Transverse colon (tissue), 4 donors: ENCODE measurements at regions of chr4 and their contacts with region 1.

Region 1: DNA sequence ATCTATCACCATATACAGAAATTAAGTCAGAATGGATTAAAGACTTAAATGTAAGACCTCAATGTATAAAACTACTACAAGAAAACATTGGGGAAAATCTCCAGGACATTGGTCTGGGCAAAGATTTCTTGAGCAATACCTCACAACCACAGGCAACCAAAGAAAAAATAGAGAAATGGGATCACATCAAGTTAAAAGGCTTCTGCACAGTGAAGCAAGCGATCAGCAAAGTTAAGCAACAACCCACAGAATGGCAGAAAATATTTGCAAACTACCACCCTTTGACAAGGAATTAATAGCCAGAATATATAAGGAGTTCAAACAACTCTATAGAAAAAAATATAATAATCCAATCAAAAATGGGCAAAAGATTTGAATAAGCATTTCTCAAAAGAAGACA is 236.9 kb upstream of the EMCN start:
- DNase-seq: no peak
- H3K4me3 ChIP-seq: no peak overlapping the region
- H3K27ac ChIP-seq: no peak overlapping the region
- H3K4me1 ChIP-seq: no peaks in the 10 kb centered on the region
- H3K27me3 ChIP-seq: no peaks in the 10 kb centered on the region
- CTCF ChIP-seq: no peak
- EP300 ChIP-seq: no peak
- POLR2A ChIP-seq: no peak

Region 2: GRCh38 chr4:100679926-100680325 is 74.8 kb before region 1 on chr4:
- in situ Hi-C with region 1: no loop called
- intact Hi-C with region 1: no loop called
- DNase-seq: no peak
- H3K4me3 ChIP-seq: no peak overlapping the region
- H3K27ac ChIP-seq: no peak overlapping the region
- H3K4me1 ChIP-seq: no peaks in the 10 kb centered on the region
- H3K27me3 ChIP-seq: no peaks in the 10 kb centered on the region
- CTCF ChIP-seq: no peak
- EP300 ChIP-seq: no peak
- POLR2A ChIP-seq: no peak

Region 3: DNA sequence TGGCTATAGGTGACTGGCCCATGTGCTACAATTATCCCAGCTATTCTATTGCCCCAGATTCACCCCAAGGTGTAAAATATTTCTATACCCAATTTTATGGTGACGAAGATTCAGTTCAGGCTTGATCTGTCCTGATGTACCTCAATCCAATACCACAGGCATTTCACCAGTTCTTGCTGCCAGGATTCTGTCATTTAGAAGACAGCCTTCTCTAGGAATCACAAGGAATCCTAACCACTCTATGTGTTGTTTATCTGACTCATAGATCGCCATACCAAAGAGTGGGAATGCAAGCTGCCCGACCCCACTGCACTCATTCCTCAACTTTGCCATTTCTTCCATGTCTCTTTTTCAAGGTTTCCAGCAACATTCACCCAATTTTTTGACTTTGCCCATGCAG is 118.1 kb after region 1 on chr4:
- in situ Hi-C with region 1: loop called in 1 of 4 experiments (anchors 25 kb)
- intact Hi-C with region 1: no loop called
- DNase-seq: no peak
- H3K4me3 ChIP-seq: no peak overlapping the region
- H3K27ac ChIP-seq: no peak overlapping the region
- H3K4me1 ChIP-seq: no peaks in the 10 kb centered on the region
- H3K27me3 ChIP-seq: no peaks in the 10 kb centered on the region
- CTCF ChIP-seq: no peak
- EP300 ChIP-seq: no peak
- POLR2A ChIP-seq: no peak

Region 4: GRCh38 chr4:101211146-101211908 is 456.6 kb after region 1 on chr4:
- in situ Hi-C with region 1: no loop called
- intact Hi-C with region 1: no loop called
- DNase-seq: no peak
- H3K4me3 ChIP-seq: no peak overlapping the region
- H3K27ac ChIP-seq: no peak overlapping the region
- H3K4me1 ChIP-seq: peaks cover 0 to 14% (median 5%) of the 10 kb centered on the region in 4 donors
- H3K27me3 ChIP-seq: no peaks in the 10 kb centered on the region
- CTCF ChIP-seq: no peak
- EP300 ChIP-seq: no peak
- POLR2A ChIP-seq: no peak

Region 5: DNA sequence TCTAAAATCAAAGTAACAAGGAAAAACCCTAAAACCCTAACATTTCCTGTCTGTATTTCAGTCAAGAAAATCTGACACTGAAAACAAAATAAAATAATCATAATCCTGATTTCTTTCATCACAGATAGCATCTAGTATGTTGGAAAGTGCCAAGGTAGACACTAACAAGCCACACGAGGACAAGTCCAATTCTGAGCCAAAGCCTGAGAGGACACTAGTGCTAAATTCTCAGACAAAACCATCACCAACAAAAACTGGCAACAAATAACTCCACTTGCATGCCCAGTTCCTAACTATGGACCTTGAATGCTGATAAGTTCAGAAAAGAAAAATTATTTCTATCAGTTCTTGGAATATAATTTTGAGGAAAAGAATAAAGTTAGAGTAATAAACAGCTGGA is 1892.4 kb after region 1 on chr4:
- in situ Hi-C with region 1: no loop called
- intact Hi-C with region 1: no loop called
- DNase-seq: no peak
- H3K4me3 ChIP-seq: no peak overlapping the region
- H3K27ac ChIP-seq: no peak overlapping the region
- H3K4me1 ChIP-seq: no peaks in the 10 kb centered on the region
- H3K27me3 ChIP-seq: no peaks in the 10 kb centered on the region
- CTCF ChIP-seq: no peak
- EP300 ChIP-seq: no peak
- POLR2A ChIP-seq: no peak